ENCODE measurements at regions of chr6 and their contacts with region 1.

Region 1: DNA sequence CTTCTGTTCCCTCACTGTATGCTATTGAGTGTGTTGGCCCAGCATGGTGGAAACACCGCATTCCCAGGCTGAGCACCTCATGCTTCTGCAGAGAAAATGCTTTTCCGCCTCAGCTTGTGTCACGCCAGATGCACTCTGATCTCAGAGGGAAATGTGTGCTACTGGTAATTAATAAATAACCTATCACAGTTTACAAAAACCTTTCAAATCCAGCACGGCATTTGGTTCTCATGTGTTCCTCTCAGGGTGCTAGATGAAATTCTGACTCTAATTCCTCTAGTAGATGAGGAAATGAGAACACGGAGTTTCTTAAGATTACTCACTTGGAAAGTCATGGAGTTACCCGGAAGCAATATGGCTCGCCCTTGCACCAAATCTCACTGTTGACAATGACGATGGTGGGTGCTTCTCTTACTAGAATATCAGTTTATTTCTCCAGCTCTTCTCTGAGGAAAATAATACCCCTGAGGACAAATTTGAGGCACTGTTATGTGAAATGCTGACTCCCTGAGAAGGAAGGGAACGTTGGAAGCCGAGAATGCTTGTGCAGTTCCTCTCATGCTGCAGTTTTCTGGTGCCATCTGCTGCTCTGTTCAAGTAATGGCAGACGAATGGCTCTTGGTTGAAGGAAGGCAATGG is 116.6 kb downstream of the RNF144B start:
- DNase-seq: peak; percentile 54
- H3K4me3 Mint-ChIP-seq: no peak overlapping the region
- H3K27ac Mint-ChIP-seq: no peak overlapping the region
- H3K4me1 Mint-ChIP-seq: no peaks in the 10 kb centered on the region
- H3K27me3 Mint-ChIP-seq: peaks cover 3% of the 10 kb centered on the region

Region 2: GRCh38 chr6:18323935-18324705 is 179.6 kb before region 1 on chr6:
- CTCF ChIA-PET with region 1: interaction called, 56 read pairs
- DNase-seq: no peak
- H3K4me3 Mint-ChIP-seq: no peak overlapping the region
- H3K27ac Mint-ChIP-seq: no peak overlapping the region
- H3K4me1 Mint-ChIP-seq: peaks cover 2% of the 10 kb centered on the region
- H3K27me3 Mint-ChIP-seq: peaks cover 4% of the 10 kb centered on the region